ENCODE measurements at regions of chr12 and their contacts with region 1.

Region 1: DNA sequence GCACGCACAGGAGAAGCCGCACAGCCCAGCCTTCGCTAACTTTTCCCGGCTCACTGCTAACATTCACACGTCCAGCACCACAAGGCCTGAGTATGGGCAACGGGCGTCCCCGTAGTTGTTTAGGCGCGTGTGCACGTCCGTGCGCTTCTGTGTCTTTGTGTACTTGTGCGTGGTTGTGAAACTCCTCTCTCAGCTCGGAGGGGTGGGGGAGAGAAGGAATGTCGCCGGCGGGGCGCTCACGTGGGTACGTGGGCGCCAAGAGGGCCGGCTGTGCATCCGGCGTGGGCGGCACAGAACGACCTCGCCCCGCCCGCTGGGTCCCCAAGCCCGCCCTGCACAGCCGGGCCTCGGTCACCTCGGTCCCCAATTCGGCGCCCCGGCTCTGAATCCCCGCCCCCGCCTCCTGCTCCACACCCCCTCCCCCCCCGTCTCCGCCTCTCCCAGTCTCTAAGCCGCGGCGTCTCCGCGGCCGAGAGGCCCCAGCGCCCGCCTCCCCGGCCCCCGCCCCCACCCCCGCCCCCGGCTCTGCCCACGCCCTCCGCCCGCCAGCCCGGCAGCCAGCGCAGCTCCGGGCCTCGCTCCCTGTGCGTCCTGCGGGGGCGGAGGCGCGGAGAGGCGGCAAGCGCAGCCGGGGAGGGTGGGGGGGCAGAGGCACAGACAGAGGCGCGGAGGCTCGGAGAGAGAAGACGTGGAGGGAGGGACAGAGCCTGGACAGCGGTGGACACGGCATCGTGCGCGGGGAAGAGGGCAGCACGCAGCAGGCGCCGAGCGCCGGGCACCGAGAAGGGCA is at the start of gene NAB2:
- DNase-seq: peak; percentile 94
- ATAC-seq: peak; percentile 73
- H3K4me3 Mint-ChIP-seq: peak within 1 kb of the TSS; percentile 96
- H3K27ac Mint-ChIP-seq: peak within 1 kb of the TSS; percentile 89
- H3K4me1 Mint-ChIP-seq: peaks cover 52% of the 10 kb centered on the region
- H3K27me3 Mint-ChIP-seq: no peaks in the 10 kb centered on the region
- total RNA-seq, gene NAB2: 13.1 to 16.1 TPM

Region 2: DNA sequence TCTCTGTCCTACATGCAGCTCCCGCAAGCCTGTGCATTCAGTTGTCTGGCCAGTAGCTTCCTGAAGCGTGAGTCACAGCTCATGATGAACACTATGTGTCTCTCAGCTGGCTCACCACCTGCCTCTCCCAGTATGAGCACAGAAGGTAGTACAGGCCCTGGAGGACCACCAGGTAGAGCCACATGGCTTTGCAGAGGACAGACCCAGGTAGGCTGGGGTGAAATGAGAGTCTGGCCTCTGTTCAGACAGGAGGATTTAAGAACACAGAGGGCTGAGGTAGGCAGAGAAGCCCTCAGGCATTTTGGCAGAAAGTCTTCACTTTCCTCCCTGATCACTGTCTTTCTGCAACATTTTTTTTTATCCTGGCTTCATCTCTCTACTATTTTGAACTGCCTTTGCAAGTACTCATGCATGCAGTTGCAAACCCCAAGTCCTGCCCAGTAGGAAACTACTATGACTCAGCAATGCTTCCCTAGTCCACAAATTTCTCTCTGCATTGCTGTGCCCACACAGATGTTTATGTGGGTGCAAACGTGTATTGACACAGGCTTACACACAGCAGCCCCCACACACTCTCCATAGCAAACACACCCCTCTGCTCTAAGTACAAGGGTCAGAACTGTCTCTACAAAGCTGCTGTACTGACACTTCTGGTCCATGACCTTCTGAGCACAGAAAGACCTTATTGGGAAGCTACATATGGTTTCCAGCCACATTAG is 147.2 kb before region 1 on chr12:
- POLR2A ChIA-PET with region 1: no interaction called
- DNase-seq: no peak
- ATAC-seq: no peak
- H3K4me3 Mint-ChIP-seq: no peak overlapping the region
- H3K27ac Mint-ChIP-seq: no peak overlapping the region
- H3K4me1 Mint-ChIP-seq: peaks cover 5% of the 10 kb centered on the region
- H3K27me3 Mint-ChIP-seq: peaks cover 32% of the 10 kb centered on the region

Region 3: GRCh38 chr12:57101844-57102695 is 13.4 kb after region 1 on chr12:
- POLR2A ChIA-PET with region 1: interaction called, 21 read pairs
- DNase-seq: no peak
- ATAC-seq: peak; percentile 34
- H3K4me3 Mint-ChIP-seq: no peak overlapping the region
- H3K27ac Mint-ChIP-seq: peak overlapping the region; percentile 79
- H3K4me1 Mint-ChIP-seq: peaks cover 48% of the 10 kb centered on the region
- H3K27me3 Mint-ChIP-seq: no peaks in the 10 kb centered on the region

Measured in activated naive CD8-positive, alpha-beta T cell treated with anti-CD3 and anti-CD28 coated beads, Interleukin-2, amount 10 ng/mL, durations not matched to agents 7 days and 5 days (primary cell).